Heart right ventricle (tissue), 16 donors: ENCODE measurements at regions of chr1 and their contacts with region 1.

Region 1: DNA sequence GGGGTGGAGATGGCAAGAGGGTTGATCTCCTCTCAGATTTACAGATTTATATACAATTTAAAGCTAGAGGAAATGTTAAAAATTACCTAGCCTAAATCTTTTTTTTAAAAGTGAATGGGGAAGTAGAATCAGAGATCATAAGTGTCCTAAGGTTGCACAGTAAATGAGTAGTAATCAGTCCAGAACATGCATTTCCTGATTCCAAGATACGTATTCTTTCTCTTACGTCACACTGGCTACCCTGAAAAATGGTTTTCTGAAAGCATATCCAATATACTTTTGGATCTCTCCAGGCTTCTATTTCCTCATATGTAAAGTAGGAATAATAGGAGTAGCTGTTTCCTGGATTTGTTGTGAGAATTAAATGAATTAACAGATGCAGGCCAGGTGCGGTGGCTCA is 11.7 kb downstream of the GADD45A start:
- DNase-seq: no peak
- ATAC-seq: peak in 5 of 8 donors; percentile 49 to 70 (median 53)
- H3K4me3 ChIP-seq: no peak overlapping the region
- H3K27ac ChIP-seq: peak overlapping the region in 3 of 10 donors; percentile 16 to 54 (median 27)
- H3K4me1 ChIP-seq: peaks cover 0 to 19% (median 9%) of the 10 kb centered on the region in 9 donors
- H3K27me3 ChIP-seq: no peaks in the 10 kb centered on the region
- CTCF ChIP-seq: no peak

Region 2: GRCh38 chr1:67735806-67736627 is 39.3 kb after region 1 on chr1:
- intact Hi-C with region 1: loop called in 2 of 10 experiments (anchors 5 kb)
- DNase-seq: peak; percentile 54 to 81
- ATAC-seq: peak; percentile 79 to 94 (median 86)
- H3K4me3 ChIP-seq: peak overlapping the region in 5 of 10 donors; percentile 8 to 34 (median 11)
- H3K27ac ChIP-seq: peak overlapping the region; percentile 49 to 84 (median 69)
- H3K4me1 ChIP-seq: peaks cover 15 to 67% (median 55%) of the 10 kb centered on the region in 9 donors
- H3K27me3 ChIP-seq: no peaks in the 10 kb centered on the region
- CTCF ChIP-seq: no peak